Posterior vena cava (tissue), 2 donors: ENCODE measurements at regions of chr2 and their contacts with region 1.

Region 1: GRCh38 chr2:200396781-200397242 is 90.3 kb downstream of the SPATS2L start:
- DNase-seq: no peak

Region 2: GRCh38 chr2:199979832-199980628 is 416.8 kb before region 1 on chr2:
- intact Hi-C with region 1: loop called in 1 of 2 experiments (anchors 5 kb)
- DNase-seq: peak; percentile 95

Region 3: GRCh38 chr2:200350850-200351285 is 45.9 kb before region 1 on chr2:
- intact Hi-C with region 1: no loop called
- DNase-seq: no peak

Region 4: GRCh38 chr2:200376513-200377354 is 20.1 kb before region 1 on chr2:
- intact Hi-C with region 1: loop called in 1 of 2 experiments (anchors 2 kb)
- DNase-seq: no peak